SK-N-SH (cell line): ENCODE measurements at regions of chr2 and their contacts with region 1.

Region 1: GRCh38 chr2:138922973-138923563 is 142.9 kb upstream of the NXPH2 start:
- DNase-seq: peak; percentile 11
- H3K4me3 ChIP-seq: no peak overlapping the region; a peak in 1 of 4 replicates
- H3K27ac ChIP-seq: no peak overlapping the region
- H3K4me1 ChIP-seq: peaks cover 0 to 2% of the 10 kb centered on the region in 2 experiments; a peak in 2 of 4 replicates
- H3K27me3 ChIP-seq: no peaks in the 10 kb centered on the region; the same call in 1 of the 2 replicates
- CTCF ChIP-seq: peak; percentile 70
- EP300 ChIP-seq: no peak
- RAD21 ChIP-seq: peak; percentile 78

Region 2: DNA sequence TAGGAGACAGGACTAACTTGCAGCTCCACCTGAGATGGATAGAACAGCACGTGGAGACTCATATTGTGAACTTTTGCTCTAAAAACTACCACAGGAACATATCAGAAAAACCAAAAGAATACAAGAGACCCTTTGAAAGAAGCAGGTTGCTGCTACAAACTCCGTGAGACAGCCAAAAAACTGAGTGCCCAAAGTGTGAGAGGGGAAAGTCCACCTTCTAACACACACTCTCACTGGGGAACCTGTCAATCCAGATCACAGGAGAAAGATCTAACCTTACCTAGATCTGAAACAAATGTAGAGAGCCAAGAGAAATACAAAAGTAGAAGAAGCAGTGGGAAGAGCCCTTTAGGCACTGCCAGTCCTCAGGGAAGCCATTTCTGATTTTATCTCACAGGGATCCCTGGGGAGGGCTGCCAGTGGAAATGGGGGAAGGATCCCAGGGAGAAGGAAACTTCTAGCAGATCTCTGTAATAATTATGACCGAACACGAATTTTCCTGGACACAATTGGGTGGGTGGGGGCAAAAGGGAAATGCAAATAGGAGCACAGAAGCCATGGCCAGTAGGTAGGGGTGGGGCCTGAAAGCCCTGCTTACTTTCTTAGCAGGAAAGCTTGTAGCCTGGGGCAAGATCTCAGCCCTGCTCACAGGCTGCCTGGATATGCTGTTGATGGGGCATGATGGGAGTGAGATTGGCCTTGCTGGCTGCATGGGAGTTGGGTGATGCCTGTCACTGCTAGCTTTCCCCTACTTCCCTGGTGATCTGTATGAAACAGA is 467.6 kb before region 1 on chr2:
- CTCF ChIA-PET with region 1: no interaction called
- POLR2A ChIA-PET with region 1: no interaction called
- DNase-seq: no peak
- H3K4me3 ChIP-seq: no peak overlapping the region
- H3K27ac ChIP-seq: no peak overlapping the region
- H3K4me1 ChIP-seq: peaks cover 0 to 8% of the 10 kb centered on the region in 2 experiments; a peak in 1 of 4 replicates
- H3K27me3 ChIP-seq: no peaks in the 10 kb centered on the region
- CTCF ChIP-seq: no peak
- EP300 ChIP-seq: no peak
- RAD21 ChIP-seq: no peak

Region 3: DNA sequence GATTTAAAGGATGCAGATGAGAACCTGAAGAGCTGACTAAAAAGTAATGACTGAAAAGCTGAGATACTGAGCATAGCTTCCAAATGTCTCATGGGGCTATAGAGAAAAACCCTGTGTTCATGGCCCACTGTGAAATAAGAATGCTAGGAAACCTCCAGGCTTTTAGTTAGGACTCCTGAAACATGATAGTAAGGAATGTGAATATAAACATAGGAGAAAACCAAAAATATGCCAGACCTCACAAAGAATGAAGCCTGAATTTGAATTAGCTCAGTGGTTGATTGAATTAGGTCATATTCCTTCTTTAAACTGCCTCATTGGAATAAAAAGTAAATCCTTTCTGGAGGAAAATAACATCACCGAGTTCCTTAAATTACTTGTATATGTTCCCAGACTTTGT is 51.6 kb after region 1 on chr2:
- CTCF ChIA-PET with region 1: no interaction called
- POLR2A ChIA-PET with region 1: no interaction called
- DNase-seq: no peak
- H3K4me3 ChIP-seq: no peak overlapping the region
- H3K27ac ChIP-seq: no peak overlapping the region
- H3K4me1 ChIP-seq: no peaks in the 10 kb centered on the region
- H3K27me3 ChIP-seq: no peaks in the 10 kb centered on the region
- CTCF ChIP-seq: no peak
- EP300 ChIP-seq: no peak
- RAD21 ChIP-seq: no peak

Region 4: GRCh38 chr2:139031722-139032121 is 108.7 kb after region 1 on chr2:
- CTCF ChIA-PET with region 1: interaction called, 36 read pairs
- POLR2A ChIA-PET with region 1: no interaction called
- DNase-seq: peak; percentile 14
- H3K4me3 ChIP-seq: no peak overlapping the region
- H3K27ac ChIP-seq: no peak overlapping the region
- H3K4me1 ChIP-seq: no peaks in the 10 kb centered on the region; a peak in 2 of 4 replicates
- H3K27me3 ChIP-seq: no peaks in the 10 kb centered on the region
- CTCF ChIP-seq: no peak; the same call in 1 of the 2 replicates
- EP300 ChIP-seq: no peak
- RAD21 ChIP-seq: peak; percentile 62

Region 5: DNA sequence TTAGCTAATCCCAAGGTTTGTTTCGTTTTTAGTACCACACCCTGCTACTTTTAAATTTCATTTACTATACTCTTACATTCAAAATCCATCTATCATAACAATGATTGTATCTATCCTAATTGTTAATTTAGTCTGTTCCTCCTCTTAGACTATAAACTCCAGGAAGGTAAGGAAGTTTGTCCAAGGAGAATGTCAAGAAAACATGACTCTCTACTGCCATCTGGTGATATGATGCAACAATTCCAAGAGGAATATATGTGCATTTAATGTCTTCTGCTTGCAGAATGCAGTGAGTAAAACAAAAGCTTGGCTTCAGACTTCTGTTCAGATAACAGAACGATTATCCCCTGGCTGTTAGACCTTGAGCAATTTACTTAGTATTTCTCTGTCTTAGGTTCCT is 1940.6 kb after region 1 on chr2:
- CTCF ChIA-PET with region 1: interaction called, 12 read pairs
- POLR2A ChIA-PET with region 1: no interaction called
- DNase-seq: peak; percentile 29
- H3K4me3 ChIP-seq: no peak overlapping the region; a peak in 1 of 4 replicates
- H3K27ac ChIP-seq: no peak overlapping the region
- H3K4me1 ChIP-seq: no peaks in the 10 kb centered on the region; a peak in 1 of 4 replicates
- H3K27me3 ChIP-seq: no peaks in the 10 kb centered on the region
- CTCF ChIP-seq: peak; percentile 68
- EP300 ChIP-seq: no peak
- RAD21 ChIP-seq: peak; percentile 79